SK-N-SH (cell line): ENCODE measurements at regions of chr5 and their contacts with region 1.

Region 1: GRCh38 chr5:132767150-132767549 is 9.9 kb downstream of the SEPTIN8 start:
- DNase-seq: no peak
- H3K4me3 ChIP-seq: no peak overlapping the region
- H3K27ac ChIP-seq: no peak overlapping the region
- H3K4me1 ChIP-seq: peaks cover 8 to 11% of the 10 kb centered on the region in 2 experiments; a peak in 2 of 4 replicates
- H3K27me3 ChIP-seq: no peaks in the 10 kb centered on the region
- CTCF ChIP-seq: no peak
- EP300 ChIP-seq: no peak
- RAD21 ChIP-seq: no peak

Region 2: DNA sequence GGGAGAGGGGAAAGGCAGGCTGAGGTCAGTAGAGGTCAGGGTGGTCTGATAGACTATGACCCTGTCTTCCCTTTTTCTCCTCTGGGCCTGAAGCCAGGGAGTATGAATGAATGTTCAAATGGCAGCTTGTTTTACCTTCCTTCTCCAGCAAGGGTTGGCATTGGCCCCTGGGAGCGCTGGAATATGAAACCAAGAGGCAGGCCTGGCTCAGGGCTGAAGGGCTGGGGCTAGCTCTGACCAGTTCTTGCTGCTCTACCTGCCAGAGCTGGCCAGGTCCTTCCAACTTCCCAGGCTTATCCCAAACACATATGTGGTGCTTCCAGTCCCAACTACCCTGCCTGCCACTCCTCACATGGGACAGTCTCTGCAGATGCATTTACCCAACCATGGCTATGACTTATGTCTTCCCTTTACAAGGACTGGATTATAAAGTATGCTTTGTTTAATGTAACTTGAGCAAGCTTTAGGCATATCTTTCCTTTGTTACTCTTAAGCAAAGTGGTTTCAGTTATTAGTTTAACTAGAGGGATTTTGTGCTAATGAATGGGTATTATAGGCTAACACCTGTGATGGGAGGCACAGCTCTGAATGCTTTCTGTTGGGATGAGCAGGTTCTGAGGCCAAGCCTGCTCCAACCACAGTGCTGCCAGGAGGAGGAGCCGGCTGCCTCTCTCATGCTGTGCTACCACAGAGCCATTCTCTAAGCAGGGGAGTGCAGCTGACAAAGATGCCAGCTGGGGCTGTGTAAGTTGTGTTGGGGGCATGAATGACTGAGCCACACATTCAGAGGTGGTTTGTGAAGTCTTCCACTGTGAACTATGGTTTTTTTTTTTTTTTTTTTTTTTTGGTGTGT is 13.8 kb before region 1 on chr5:
- CTCF ChIA-PET with region 1: interaction called, 34 read pairs
- POLR2A ChIA-PET with region 1: no interaction called
- DNase-seq: peak; percentile 47
- H3K4me3 ChIP-seq: no peak overlapping the region
- H3K27ac ChIP-seq: no peak overlapping the region
- H3K4me1 ChIP-seq: no peaks in the 10 kb centered on the region
- H3K27me3 ChIP-seq: no peaks in the 10 kb centered on the region
- CTCF ChIP-seq: peak; percentile 42
- EP300 ChIP-seq: no peak
- RAD21 ChIP-seq: peak; percentile 58